CD8-positive, alpha-beta T cell (primary cell): ENCODE measurements at regions of chr2 and their contacts with region 1.

Region 1: DNA sequence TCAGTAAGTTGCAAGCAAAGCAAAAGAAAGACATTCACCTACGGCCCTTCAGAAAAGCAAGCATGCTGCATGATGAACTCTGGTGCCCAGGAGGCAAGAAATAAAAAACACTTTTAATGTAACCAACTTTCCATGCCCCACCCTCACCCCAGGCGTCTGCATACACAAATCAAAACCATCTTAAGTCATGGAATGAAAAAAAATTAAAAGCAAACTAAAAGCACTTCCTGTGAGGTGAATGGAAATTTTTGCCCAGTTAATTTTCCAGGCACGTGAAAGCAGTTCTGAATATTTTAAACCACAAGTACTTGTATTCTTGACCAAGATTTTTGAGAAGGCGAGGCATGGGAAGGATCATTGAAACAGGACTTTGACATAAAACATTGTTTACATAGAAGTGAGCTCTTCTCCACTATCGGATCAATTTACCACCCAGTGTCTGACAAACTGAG is 2.5 kb upstream of the ICOS start:
- DNase-seq: peak in 5 of 9 experiments; percentile 37 to 63 (median 46)
- ATAC-seq: peak; percentile 32
- H3K4me3 ChIP-seq: no peak overlapping the region
- H3K4me3 Mint-ChIP-seq: peak overlapping the region; percentile 70
- H3K27ac ChIP-seq: peak overlapping the region; percentile 17 to 74
- H3K27ac Mint-ChIP-seq: peak overlapping the region; percentile 93
- H3K4me1 ChIP-seq: peaks cover 39% of the 10 kb centered on the region
- H3K4me1 Mint-ChIP-seq: peaks cover 67% of the 10 kb centered on the region
- H3K27me3 ChIP-seq: no peaks in the 10 kb centered on the region
- H3K27me3 Mint-ChIP-seq: no peaks in the 10 kb centered on the region
- CTCF ChIP-seq: no peak

Region 2: GRCh38 chr2:201964631-201965206 is 1969.3 kb before region 1 on chr2:
- CTCF ChIA-PET with region 1: no interaction called
- POLR2A ChIA-PET with region 1: no interaction called
- intact Hi-C with region 1: no loop called
- DNase-seq: peak in 6 of 9 experiments; percentile 7 to 58 (median 28)
- ATAC-seq: peak; percentile 51
- H3K4me3 ChIP-seq: peak overlapping the region in 1 of 2 experiments; percentile 19
- H3K4me3 Mint-ChIP-seq: peak overlapping the region; percentile 43
- H3K27ac ChIP-seq: peak overlapping the region in 1 of 2 experiments; percentile 10
- H3K27ac Mint-ChIP-seq: no peak overlapping the region
- H3K4me1 ChIP-seq: peaks cover 6% of the 10 kb centered on the region
- H3K4me1 Mint-ChIP-seq: no peaks in the 10 kb centered on the region
- H3K27me3 ChIP-seq: no peaks in the 10 kb centered on the region
- H3K27me3 Mint-ChIP-seq: no peaks in the 10 kb centered on the region
- CTCF ChIP-seq: no peak

Region 3: GRCh38 chr2:203014456-203015199 is 919.4 kb before region 1 on chr2 and contains the start of gene NBEAL1:
- CTCF ChIA-PET with region 1: no interaction called
- POLR2A ChIA-PET with region 1: no interaction called
- intact Hi-C with region 1: no loop called
- DNase-seq: peak; percentile 92 to 99 (median 95)
- ATAC-seq: peak; percentile 90
- H3K4me3 ChIP-seq: peak within 1 kb of the TSS; percentile 77 to 97
- H3K4me3 Mint-ChIP-seq: peak within 1 kb of the TSS; percentile 88
- H3K27ac ChIP-seq: peak within 1 kb of the TSS; percentile 86 to 89
- H3K27ac Mint-ChIP-seq: peak within 1 kb of the TSS; percentile 92
- H3K4me1 ChIP-seq: peaks cover 37% of the 10 kb centered on the region
- H3K4me1 Mint-ChIP-seq: peaks cover 46% of the 10 kb centered on the region
- H3K27me3 ChIP-seq: no peaks in the 10 kb centered on the region
- H3K27me3 Mint-ChIP-seq: no peaks in the 10 kb centered on the region
- CTCF ChIP-seq: no peak
- total RNA-seq, gene NBEAL1: 11.2 to 13.2 TPM

Region 4: GRCh38 chr2:203623096-203623495 is 311.0 kb before region 1 on chr2:
- CTCF ChIA-PET with region 1: no interaction called
- POLR2A ChIA-PET with region 1: no interaction called
- intact Hi-C with region 1: no loop called
- DNase-seq: no peak
- ATAC-seq: no peak
- H3K4me3 ChIP-seq: no peak overlapping the region
- H3K4me3 Mint-ChIP-seq: no peak overlapping the region
- H3K27ac ChIP-seq: no peak overlapping the region
- H3K27ac Mint-ChIP-seq: no peak overlapping the region
- H3K4me1 ChIP-seq: no peaks in the 10 kb centered on the region
- H3K4me1 Mint-ChIP-seq: peaks cover 7% of the 10 kb centered on the region
- H3K27me3 ChIP-seq: no peaks in the 10 kb centered on the region
- H3K27me3 Mint-ChIP-seq: no peaks in the 10 kb centered on the region
- CTCF ChIP-seq: no peak

Region 5: DNA sequence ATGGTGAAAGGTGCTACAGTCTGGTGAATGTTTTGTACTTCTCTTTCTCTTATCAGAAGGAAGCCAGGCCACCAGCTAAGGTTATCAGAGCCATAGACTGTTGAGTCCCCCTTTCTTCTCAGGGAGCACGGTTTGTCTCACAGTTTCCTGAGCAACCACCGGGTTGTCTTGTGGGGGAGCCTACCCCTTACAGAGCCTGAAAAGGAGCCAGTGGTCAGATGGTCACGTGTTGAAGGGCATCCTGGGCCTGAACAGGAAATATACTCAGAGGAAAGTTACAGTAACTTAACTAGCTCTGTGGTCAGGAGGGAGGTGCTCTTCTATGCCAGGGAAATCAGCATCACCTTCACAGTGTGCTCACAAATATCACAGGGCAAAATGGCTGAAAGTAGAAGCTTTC is 216.0 kb before region 1 on chr2:
- CTCF ChIA-PET with region 1: no interaction called
- POLR2A ChIA-PET with region 1: no interaction called
- intact Hi-C with region 1: loop called in 1 of 2 experiments (anchors 10 kb)
- DNase-seq: peak in 7 of 9 experiments; percentile 42 to 83 (median 68)
- ATAC-seq: peak; percentile 42
- H3K4me3 ChIP-seq: peak overlapping the region in 1 of 2 experiments; percentile 10
- H3K4me3 Mint-ChIP-seq: peak overlapping the region; percentile 59
- H3K27ac ChIP-seq: peak overlapping the region; percentile 39 to 57
- H3K27ac Mint-ChIP-seq: peak overlapping the region; percentile 95
- H3K4me1 ChIP-seq: peaks cover 98% of the 10 kb centered on the region
- H3K4me1 Mint-ChIP-seq: peaks cover 98% of the 10 kb centered on the region
- H3K27me3 ChIP-seq: no peaks in the 10 kb centered on the region
- H3K27me3 Mint-ChIP-seq: no peaks in the 10 kb centered on the region
- CTCF ChIP-seq: no peak

Region 6: GRCh38 chr2:203949228-203949627 is 15.2 kb after region 1 on chr2:
- CTCF ChIA-PET with region 1: interaction called, 5 read pairs
- POLR2A ChIA-PET with region 1: interaction called, 26 read pairs
- intact Hi-C with region 1: loop called in 1 of 2 experiments (anchors 2 kb)
- DNase-seq: peak in 2 of 9 experiments; percentile 46 to 62
- ATAC-seq: peak; percentile 53
- H3K4me3 ChIP-seq: no peak overlapping the region
- H3K4me3 Mint-ChIP-seq: peak overlapping the region; percentile 63
- H3K27ac ChIP-seq: peak overlapping the region; percentile 8 to 54
- H3K27ac Mint-ChIP-seq: peak overlapping the region; percentile 90
- H3K4me1 ChIP-seq: peaks cover 68% of the 10 kb centered on the region
- H3K4me1 Mint-ChIP-seq: peaks cover 89% of the 10 kb centered on the region
- H3K27me3 ChIP-seq: no peaks in the 10 kb centered on the region
- H3K27me3 Mint-ChIP-seq: no peaks in the 10 kb centered on the region
- CTCF ChIP-seq: no peak

Region 7: DNA sequence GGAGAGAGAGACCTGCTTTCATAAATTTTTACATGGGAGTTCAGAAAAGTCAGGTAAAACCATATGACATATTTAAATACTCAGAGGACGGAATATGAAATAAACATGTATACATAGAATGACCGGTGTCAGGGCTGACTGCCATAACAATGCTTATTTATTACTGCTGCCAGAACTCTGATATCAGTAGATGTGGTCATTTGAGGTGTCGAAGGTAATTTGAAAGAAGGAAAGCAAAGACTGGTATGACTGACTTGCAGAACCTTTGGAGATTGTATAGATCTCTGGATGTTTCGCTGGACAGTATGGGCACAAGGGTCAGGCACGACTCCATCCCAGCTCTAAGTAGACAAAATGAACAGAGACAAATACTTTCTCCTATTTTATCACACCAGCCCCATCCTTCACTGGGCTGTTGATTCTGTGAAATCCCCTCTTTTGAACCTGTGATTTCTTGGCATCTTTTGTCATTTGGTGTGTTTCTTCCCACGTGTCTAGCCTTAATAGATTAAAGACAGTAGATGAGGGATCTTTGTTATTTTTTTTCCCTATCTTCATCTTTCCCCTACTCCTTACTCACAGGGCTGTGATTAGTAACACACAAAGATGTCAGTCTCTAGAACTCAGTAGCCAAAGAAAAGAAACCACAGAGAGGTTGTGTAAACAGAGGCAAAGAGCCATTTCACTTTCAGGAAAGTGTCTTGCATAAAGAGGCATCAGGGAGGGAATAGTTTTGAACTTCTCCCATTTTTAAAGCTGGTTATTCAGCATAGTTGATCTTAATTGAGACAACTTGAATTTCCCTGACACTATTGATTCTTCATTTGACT is 64.1 kb after region 1 on chr2:
- CTCF ChIA-PET with region 1: interaction called, 3 read pairs
- POLR2A ChIA-PET with region 1: interaction called, 6 read pairs
- intact Hi-C with region 1: loop called in 1 of 2 experiments (anchors 5 kb)
- DNase-seq: peak in 1 of 9 experiments; percentile 25
- ATAC-seq: no peak
- H3K4me3 ChIP-seq: no peak overlapping the region
- H3K4me3 Mint-ChIP-seq: no peak overlapping the region
- H3K27ac ChIP-seq: no peak overlapping the region
- H3K27ac Mint-ChIP-seq: no peak overlapping the region
- H3K4me1 ChIP-seq: peaks cover 25% of the 10 kb centered on the region
- H3K4me1 Mint-ChIP-seq: peaks cover 64% of the 10 kb centered on the region
- H3K27me3 ChIP-seq: no peaks in the 10 kb centered on the region
- H3K27me3 Mint-ChIP-seq: no peaks in the 10 kb centered on the region
- CTCF ChIP-seq: no peak

Region 8: GRCh38 chr2:204051476-204051875 is 117.4 kb after region 1 on chr2:
- CTCF ChIA-PET with region 1: interaction called, 28 read pairs
- POLR2A ChIA-PET with region 1: no interaction called
- intact Hi-C with region 1: loop called (anchors 1 to 2 kb)
- DNase-seq: peak in 2 of 9 experiments; percentile 30 to 39
- ATAC-seq: no peak
- H3K4me3 ChIP-seq: no peak overlapping the region
- H3K4me3 Mint-ChIP-seq: no peak overlapping the region
- H3K27ac ChIP-seq: no peak overlapping the region
- H3K27ac Mint-ChIP-seq: no peak overlapping the region
- H3K4me1 ChIP-seq: no peaks in the 10 kb centered on the region
- H3K4me1 Mint-ChIP-seq: peaks cover 13% of the 10 kb centered on the region
- H3K27me3 ChIP-seq: no peaks in the 10 kb centered on the region
- H3K27me3 Mint-ChIP-seq: no peaks in the 10 kb centered on the region
- CTCF ChIP-seq: peak; percentile 21

Region 9: DNA sequence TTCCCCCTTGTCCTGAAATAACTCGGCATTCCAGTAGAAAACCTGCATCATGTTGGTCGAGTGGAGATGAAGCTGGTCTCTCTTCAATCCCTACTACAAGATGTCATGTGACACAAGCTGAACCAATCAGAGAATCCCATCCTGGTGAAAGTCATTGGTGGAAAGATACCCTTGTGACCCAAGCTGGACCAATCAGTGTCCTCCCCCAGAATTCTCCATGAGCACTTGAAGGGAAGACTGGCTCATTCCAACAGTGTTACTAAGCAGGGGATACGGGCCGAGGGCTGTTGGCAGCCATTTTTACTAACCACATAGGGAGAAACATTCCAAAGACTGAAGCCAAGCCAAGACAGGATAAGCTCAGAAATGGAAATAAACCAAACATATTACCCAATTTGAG is 300.8 kb after region 1 on chr2:
- CTCF ChIA-PET with region 1: no interaction called
- POLR2A ChIA-PET with region 1: no interaction called
- intact Hi-C with region 1: no loop called
- DNase-seq: no peak
- ATAC-seq: no peak
- H3K4me3 ChIP-seq: no peak overlapping the region
- H3K4me3 Mint-ChIP-seq: no peak overlapping the region
- H3K27ac ChIP-seq: no peak overlapping the region
- H3K27ac Mint-ChIP-seq: no peak overlapping the region
- H3K4me1 ChIP-seq: no peaks in the 10 kb centered on the region
- H3K4me1 Mint-ChIP-seq: no peaks in the 10 kb centered on the region
- H3K27me3 ChIP-seq: no peaks in the 10 kb centered on the region
- H3K27me3 Mint-ChIP-seq: peaks cover under 1% of the 10 kb centered on the region
- CTCF ChIP-seq: no peak